PC-9 (cell line): ENCODE measurements at regions of chr14 and their contacts with region 1.

Region 1: GRCh38 chr14:37116933-37117849 is 55.2 kb downstream of the SLC25A21 start:
- DNase-seq: peak in 1 of 2 experiments; percentile 76
- H3K4me3 ChIP-seq: no peak overlapping the region
- H3K27ac ChIP-seq: peak overlapping the region; percentile 85
- H3K4me1 ChIP-seq: peaks cover 22% of the 10 kb centered on the region
- H3K27me3 ChIP-seq: no peaks in the 10 kb centered on the region
- CTCF ChIP-seq: peak; percentile 50

Region 2: GRCh38 chr14:36647824-36648753 is 469.1 kb before region 1 on chr14:
- CTCF ChIA-PET with region 1: interaction called, 16 read pairs
- POLR2A ChIA-PET with region 1: no interaction called
- intact Hi-C with region 1: loop called (anchors 1 kb)
- DNase-seq: peak in 1 of 2 experiments; percentile 55
- H3K4me3 ChIP-seq: peak overlapping the region; percentile 31; the same call in 1 of the 2 replicates
- H3K27ac ChIP-seq: no peak overlapping the region
- H3K4me1 ChIP-seq: no peaks in the 10 kb centered on the region
- H3K27me3 ChIP-seq: no peaks in the 10 kb centered on the region
- CTCF ChIP-seq: peak; percentile 51; the same call in 1 of the 2 replicates

Region 3: GRCh38 chr14:36661756-36662498 is 455.3 kb before region 1 on chr14 and contains the start of gene PAX9:
- CTCF ChIA-PET with region 1: no interaction called
- POLR2A ChIA-PET with region 1: interaction called, 3 read pairs
- intact Hi-C with region 1: loop called (anchors 5 kb)
- DNase-seq: peak; percentile 75 to 89
- H3K4me3 ChIP-seq: peak within 1 kb of the TSS; percentile 85
- H3K27ac ChIP-seq: no peak within 1 kb of the TSS
- H3K4me1 ChIP-seq: no peaks in the 10 kb centered on the region
- H3K27me3 ChIP-seq: no peaks in the 10 kb centered on the region
- CTCF ChIP-seq: no peak
- total RNA-seq, gene PAX9: 7.6 and 8.5 TPM in 2 replicates

Region 4: DNA sequence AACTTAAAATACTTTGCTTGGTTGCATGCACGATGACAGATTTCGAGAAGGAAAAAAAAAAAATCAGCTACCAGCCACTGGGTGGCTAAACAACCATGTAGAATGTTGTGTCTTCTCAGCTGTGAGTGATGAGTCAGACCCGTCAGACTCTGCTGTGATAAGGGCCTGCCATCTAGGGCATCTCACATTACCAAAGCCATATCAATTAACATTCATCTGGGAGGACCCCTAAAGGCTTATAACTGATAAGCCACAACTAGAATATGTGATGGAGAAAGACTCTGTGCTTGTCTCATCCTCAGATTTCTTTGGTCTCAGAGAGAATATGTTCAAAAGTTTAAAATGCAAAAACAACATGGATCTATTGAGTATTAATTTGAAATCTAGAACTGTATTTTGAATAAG is 344.1 kb before region 1 on chr14:
- CTCF ChIA-PET with region 1: no interaction called
- POLR2A ChIA-PET with region 1: no interaction called
- intact Hi-C with region 1: loop called (anchors 2 kb)
- DNase-seq: peak; percentile 18 to 57
- H3K4me3 ChIP-seq: no peak overlapping the region
- H3K27ac ChIP-seq: no peak overlapping the region
- H3K4me1 ChIP-seq: peaks cover 47% of the 10 kb centered on the region
- H3K27me3 ChIP-seq: no peaks in the 10 kb centered on the region
- CTCF ChIP-seq: peak; percentile 28; the same call in 1 of the 2 replicates

Region 5: DNA sequence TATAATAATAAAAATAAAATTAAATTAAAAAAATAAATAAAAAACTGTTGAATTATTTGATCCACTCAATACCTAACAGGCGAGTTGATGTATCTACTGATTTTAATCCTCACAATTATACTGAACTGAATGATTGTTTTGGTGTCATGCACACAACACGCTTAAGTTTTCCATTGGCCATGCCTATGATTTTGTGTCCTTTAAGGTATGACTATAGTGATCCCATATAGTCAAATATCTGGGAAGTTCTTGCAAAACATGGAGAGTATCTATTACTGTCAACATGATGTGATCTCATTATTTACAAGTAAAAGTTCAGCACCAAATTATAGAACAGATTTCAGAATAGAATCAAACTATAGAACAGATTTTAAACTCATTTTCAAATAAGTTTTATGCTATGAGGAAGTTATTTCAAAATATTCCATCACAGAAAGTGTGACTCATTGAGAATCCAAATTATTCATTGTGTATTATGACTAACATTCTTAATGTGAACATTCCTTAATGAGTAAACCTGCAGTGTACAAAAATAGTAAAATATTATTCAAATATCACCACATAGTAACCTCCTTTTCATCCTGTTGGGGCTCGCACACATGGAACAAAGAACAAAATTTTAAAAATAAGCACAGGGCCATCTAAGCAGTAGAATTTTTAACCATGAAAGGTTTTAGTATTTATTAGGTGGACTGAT is 135.2 kb before region 1 on chr14:
- CTCF ChIA-PET with region 1: interaction called, 6 read pairs
- POLR2A ChIA-PET with region 1: no interaction called
- intact Hi-C with region 1: loop called (anchors 1 kb)
- DNase-seq: peak in 1 of 2 experiments; percentile 91
- H3K4me3 ChIP-seq: no peak overlapping the region
- H3K27ac ChIP-seq: peak overlapping the region; percentile 99
- H3K4me1 ChIP-seq: peaks cover 14% of the 10 kb centered on the region
- H3K27me3 ChIP-seq: no peaks in the 10 kb centered on the region
- CTCF ChIP-seq: no peak

Region 6: DNA sequence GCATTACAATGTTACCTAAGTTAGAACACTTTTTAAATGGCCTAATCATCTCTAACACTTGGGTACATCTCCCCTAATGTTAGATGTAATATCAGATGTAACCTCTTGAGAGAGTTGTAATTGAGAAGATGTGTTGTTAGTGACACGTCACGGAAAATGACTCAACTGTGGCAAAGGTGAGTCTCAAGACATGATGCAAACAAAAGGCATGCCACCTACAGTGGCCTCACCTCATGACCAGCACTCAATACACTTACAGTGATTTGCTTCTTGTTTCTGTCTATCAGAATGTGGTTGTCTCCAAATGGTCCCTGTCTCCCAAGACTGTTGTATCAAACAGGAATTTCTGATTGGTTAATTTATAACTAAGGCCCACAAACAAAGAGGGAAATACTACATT is 36.0 kb before region 1 on chr14:
- CTCF ChIA-PET with region 1: no interaction called
- POLR2A ChIA-PET with region 1: no interaction called
- intact Hi-C with region 1: loop called (anchors 1 kb)
- DNase-seq: peak; percentile 54 to 75
- H3K4me3 ChIP-seq: no peak overlapping the region
- H3K27ac ChIP-seq: peak overlapping the region; percentile 79
- H3K4me1 ChIP-seq: peaks cover 19% of the 10 kb centered on the region
- H3K27me3 ChIP-seq: no peaks in the 10 kb centered on the region
- CTCF ChIP-seq: no peak